HEK293 (cell line): ENCODE measurements at regions of chr16 and their contacts with region 1.

Region 1: GRCh38 chr16:67806428-67807147 is at the starts of genes RANBP10 and TSNAXIP1:
- H3K4me3 ChIP-seq: peak within 1 kb of the TSS; percentile 88
- H3K27ac ChIP-seq: peak within 1 kb of the TSS; percentile 18; the same call in 1 of the 2 replicates
- H3K4me1 ChIP-seq: peaks cover 8% of the 10 kb centered on the region
- CTCF ChIP-seq: peak; percentile 50; the same call in 1 of the 2 replicates

Region 2: DNA sequence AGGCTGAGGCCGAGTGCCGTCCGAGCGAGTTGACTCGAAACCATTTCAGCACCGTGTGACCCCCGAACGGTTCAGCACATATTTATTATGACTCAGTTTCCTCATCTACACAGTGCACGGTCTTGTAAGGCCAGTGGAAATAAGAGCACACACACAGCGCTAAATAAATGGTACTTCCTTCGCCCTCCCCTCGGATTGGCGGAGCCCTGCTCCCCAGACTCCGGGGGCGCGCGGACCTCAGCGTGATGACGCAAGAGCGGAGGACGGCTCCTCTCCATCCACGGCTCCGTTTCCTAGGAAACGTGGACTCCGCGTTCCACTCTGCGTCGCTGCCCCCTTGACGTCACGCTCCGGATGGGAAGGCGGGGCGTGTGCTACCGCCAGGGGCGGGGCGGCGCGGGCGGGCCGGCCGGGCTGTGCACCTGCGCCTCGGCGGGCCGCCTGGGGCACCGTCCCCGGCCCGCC is 146.0 kb before region 1 on chr16 and contains the start of gene PARD6A:
- CTCF ChIA-PET with region 1: no interaction called
- POLR2A ChIA-PET with region 1: interaction called, 10 read pairs
- H3K4me3 ChIP-seq: peak within 1 kb of the TSS; percentile 78
- H3K27ac ChIP-seq: peak within 1 kb of the TSS; percentile 75
- H3K4me1 ChIP-seq: 0 out of 2 replicates have a peak, but pooled peaks cover 4% of the 10 kb centered on the region
- CTCF ChIP-seq: no peak

Region 3: GRCh38 chr16:67719048-67719777 is 87.4 kb before region 1 on chr16 and contains the start of gene GFOD2:
- CTCF ChIA-PET with region 1: interaction called, 3 read pairs
- POLR2A ChIA-PET with region 1: interaction called, 25 read pairs
- H3K4me3 ChIP-seq: peak within 1 kb of the TSS; percentile 69
- H3K27ac ChIP-seq: peak within 1 kb of the TSS; percentile 43; the same call in 1 of the 2 replicates
- H3K4me1 ChIP-seq: no peaks in the 10 kb centered on the region; the same call in 1 of the 2 replicates
- CTCF ChIP-seq: peak; percentile 64; the same call in 1 of the 2 replicates

Region 4: GRCh38 chr16:67841764-67842508 is 35.3 kb after region 1 on chr16 and contains the start of gene THAP11:
- CTCF ChIA-PET with region 1: no interaction called
- POLR2A ChIA-PET with region 1: interaction called, 10 read pairs
- H3K4me3 ChIP-seq: peak within 1 kb of the TSS; percentile 92
- H3K27ac ChIP-seq: peak within 1 kb of the TSS; percentile 99
- H3K4me1 ChIP-seq: peaks cover 16% of the 10 kb centered on the region
- CTCF ChIP-seq: peak; percentile 96

Region 5: GRCh38 chr16:68062910-68063393 is 256.4 kb after region 1 on chr16:
- CTCF ChIA-PET with region 1: no interaction called
- POLR2A ChIA-PET with region 1: no interaction called
- H3K4me3 ChIP-seq: no peak overlapping the region
- H3K27ac ChIP-seq: no peak overlapping the region
- H3K4me1 ChIP-seq: peaks cover under 1% of the 10 kb centered on the region; the same call in 1 of the 2 replicates
- CTCF ChIP-seq: no peak